Ovary (tissue), 10 donors: ENCODE measurements at regions of chr11 and their contacts with region 1.

Region 1: DNA sequence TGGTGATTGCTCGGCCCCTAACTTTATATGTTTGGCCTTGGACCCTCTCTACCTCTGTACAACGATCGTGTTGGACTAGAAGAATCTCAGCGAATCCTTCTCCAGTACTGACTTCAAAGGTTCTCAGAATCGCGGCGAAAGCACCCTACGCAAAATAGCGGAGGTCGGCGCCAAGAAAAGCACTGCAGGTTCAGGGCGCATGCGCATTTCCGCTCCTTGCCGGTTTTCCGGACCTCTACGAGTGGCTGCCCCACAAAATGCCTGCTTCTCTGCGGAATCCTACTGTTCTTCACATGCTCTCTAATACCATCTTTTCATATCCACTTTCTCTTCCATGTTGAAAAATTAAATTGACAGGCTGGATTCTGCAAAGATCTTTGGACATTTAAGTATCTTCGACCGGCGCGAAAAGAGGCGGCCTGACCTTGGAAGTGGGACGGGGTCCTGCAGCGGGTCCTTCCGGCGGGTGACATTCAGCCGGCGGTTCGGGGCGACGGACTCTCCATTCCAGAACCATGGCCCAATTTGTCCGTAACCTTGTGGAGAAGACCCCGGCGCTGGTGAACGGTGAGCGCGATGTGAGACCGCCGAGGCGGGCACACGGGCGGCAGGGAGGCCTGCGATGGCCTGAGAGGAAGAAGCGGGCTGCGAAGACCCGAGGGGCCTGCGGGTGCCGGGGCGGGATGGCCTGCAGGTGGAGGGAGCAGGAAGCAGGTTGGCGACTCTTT is at the start of gene ATP5MG:
- DNase-seq: peak; percentile 89 to 95 (median 91)
- H3K4me3 ChIP-seq: peak within 1 kb of the TSS; percentile 98
- H3K27ac ChIP-seq: peak within 1 kb of the TSS; percentile 26 to 83
- H3K4me1 ChIP-seq: peaks cover 6% of the 10 kb centered on the region
- H3K27me3 ChIP-seq: no peaks in the 10 kb centered on the region
- CTCF ChIP-seq: no peak
- EP300 ChIP-seq: no peak
- POLR2A ChIP-seq: peak; percentile 31
- total RNA-seq, gene ATP5MG: 70.5 to 201 (median 155) TPM

Region 2: GRCh38 chr11:117870103-117870952 is 531.0 kb before region 1 on chr11:
- intact Hi-C with region 1: no loop called
- DNase-seq: no peak
- H3K4me3 ChIP-seq: no peak overlapping the region
- H3K27ac ChIP-seq: peak overlapping the region in 1 of 2 donors; percentile 42
- H3K4me1 ChIP-seq: peaks cover 40% of the 10 kb centered on the region
- H3K27me3 ChIP-seq: no peaks in the 10 kb centered on the region
- CTCF ChIP-seq: no peak
- EP300 ChIP-seq: no peak
- POLR2A ChIP-seq: no peak

Region 3: GRCh38 chr11:118152552-118153471 is 248.5 kb before region 1 on chr11 and contains the start of gene SCN4B:
- intact Hi-C with region 1: no loop called
- DNase-seq: peak; percentile 50 to 78 (median 63)
- H3K4me3 ChIP-seq: peak within 1 kb of the TSS; percentile 45
- H3K27ac ChIP-seq: no peak within 1 kb of the TSS
- H3K4me1 ChIP-seq: peaks cover 2% of the 10 kb centered on the region
- H3K27me3 ChIP-seq: no peaks in the 10 kb centered on the region
- CTCF ChIP-seq: no peak
- EP300 ChIP-seq: no peak
- POLR2A ChIP-seq: no peak
- total RNA-seq, gene SCN4B: 0.10 to 2.9 (median 0.52) TPM

Region 4: GRCh38 chr11:118435893-118436624 is 34.7 kb after region 1 on chr11 and contains the start of gene KMT2A:
- intact Hi-C with region 1: loop called in 2 of 4 experiments (anchors 5 kb)
- DNase-seq: peak; percentile 98 to 100 (median 99)
- H3K4me3 ChIP-seq: peak within 1 kb of the TSS; percentile 70
- H3K27ac ChIP-seq: peak within 1 kb of the TSS; percentile 84 to 89
- H3K4me1 ChIP-seq: peaks cover 3% of the 10 kb centered on the region
- H3K27me3 ChIP-seq: no peaks in the 10 kb centered on the region
- CTCF ChIP-seq: peak in 2 of 3 donors; percentile 60 to 99
- EP300 ChIP-seq: no peak
- POLR2A ChIP-seq: peak; percentile 50
- total RNA-seq, gene KMT2A: 72.0 to 107 (median 82.0) TPM

Region 5: GRCh38 chr11:118488480-118489109 is 87.3 kb after region 1 on chr11:
- intact Hi-C with region 1: loop called in 3 of 4 experiments (anchors 5 to 10 kb)
- DNase-seq: peak; percentile 47 to 71 (median 65)
- H3K4me3 ChIP-seq: no peak overlapping the region
- H3K27ac ChIP-seq: no peak overlapping the region
- H3K4me1 ChIP-seq: no peaks in the 10 kb centered on the region
- H3K27me3 ChIP-seq: no peaks in the 10 kb centered on the region
- CTCF ChIP-seq: peak; percentile 41 to 73 (median 65)
- EP300 ChIP-seq: no peak
- POLR2A ChIP-seq: no peak

Region 6: GRCh38 chr11:118497831-118498230 is 96.5 kb after region 1 on chr11:
- intact Hi-C with region 1: loop called in 1 of 4 experiments (anchors 10 kb)
- DNase-seq: no peak
- H3K4me3 ChIP-seq: no peak overlapping the region
- H3K27ac ChIP-seq: no peak overlapping the region
- H3K4me1 ChIP-seq: no peaks in the 10 kb centered on the region
- H3K27me3 ChIP-seq: no peaks in the 10 kb centered on the region
- CTCF ChIP-seq: no peak
- EP300 ChIP-seq: no peak
- POLR2A ChIP-seq: no peak